ENCODE measurements at regions of chr13 and their contacts with region 1.

Region 1: GRCh38 chr13:40640845-40641458 is 25.5 kb downstream of the FOXO1 start:
- DNase-seq: peak in 3 of 5 donors; percentile 33 to 61 (median 37)
- H3K4me3 ChIP-seq: no peak overlapping the region
- H3K4me3 Mint-ChIP-seq: peak overlapping the region; percentile 67 to 86 (median 76)
- H3K27ac ChIP-seq: no peak overlapping the region
- H3K27ac Mint-ChIP-seq: peak overlapping the region; percentile 19 to 91 (median 68)
- H3K4me1 ChIP-seq: peaks cover 98% of the 10 kb centered on the region
- H3K4me1 Mint-ChIP-seq: peaks cover 70 to 96% (median 86%) of the 10 kb centered on the region in 4 donors
- H3K27me3 ChIP-seq: no peaks in the 10 kb centered on the region
- H3K27me3 Mint-ChIP-seq: no peaks in the 10 kb centered on the region

Region 2: GRCh38 chr13:40629678-40630384 is 11.1 kb before region 1 on chr13:
- CTCF ChIA-PET with region 1: interaction called, 3 read pairs
- POLR2A ChIA-PET with region 1: no interaction called
- intact Hi-C with region 1: loop called (anchors 2 kb)
- DNase-seq: no peak
- H3K4me3 ChIP-seq: no peak overlapping the region
- H3K4me3 Mint-ChIP-seq: peak overlapping the region in 5 of 8 donors; percentile 14 to 65 (median 49)
- H3K27ac ChIP-seq: no peak overlapping the region
- H3K27ac Mint-ChIP-seq: peak overlapping the region in 6 of 7 donors; percentile 60 to 77 (median 63)
- H3K4me1 ChIP-seq: peaks cover 90% of the 10 kb centered on the region
- H3K4me1 Mint-ChIP-seq: peaks cover 61 to 94% (median 81%) of the 10 kb centered on the region in 4 donors
- H3K27me3 ChIP-seq: no peaks in the 10 kb centered on the region
- H3K27me3 Mint-ChIP-seq: no peaks in the 10 kb centered on the region